CD8-positive, alpha-beta T cell (primary cell): ENCODE measurements at regions of chr19 and their contacts with region 1.

Region 1: DNA sequence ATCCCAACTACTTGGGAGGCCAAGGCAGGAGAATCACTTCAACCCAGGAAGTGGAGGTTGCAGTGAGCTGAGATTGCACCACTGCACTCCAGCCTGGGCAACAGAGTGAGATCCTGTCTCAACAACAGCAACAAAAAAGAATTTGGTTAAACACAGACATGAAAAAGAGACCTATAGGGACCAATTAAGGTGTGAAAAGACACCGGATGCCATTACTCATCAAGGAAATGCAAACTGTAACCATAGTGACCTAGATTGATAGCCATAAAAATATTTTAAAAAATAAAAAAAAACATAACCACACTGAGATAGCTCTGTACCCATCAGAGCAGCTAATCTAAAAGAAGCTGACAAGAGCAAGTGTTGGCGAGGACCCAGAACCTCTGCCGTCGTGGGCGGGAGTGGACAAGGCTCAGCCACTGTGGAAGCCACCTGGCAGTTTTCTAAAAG is 37.1 kb upstream of the ISYNA1 start:
- DNase-seq: peak in 5 of 9 experiments; percentile 42 to 89 (median 53)
- ATAC-seq: peak; percentile 72
- H3K4me3 ChIP-seq: no peak overlapping the region
- H3K4me3 Mint-ChIP-seq: no peak overlapping the region
- H3K27ac ChIP-seq: peak overlapping the region; percentile 42 to 91
- H3K27ac Mint-ChIP-seq: peak overlapping the region; percentile 90
- H3K4me1 ChIP-seq: peaks cover 55% of the 10 kb centered on the region
- H3K4me1 Mint-ChIP-seq: peaks cover 60% of the 10 kb centered on the region
- H3K27me3 ChIP-seq: no peaks in the 10 kb centered on the region
- H3K27me3 Mint-ChIP-seq: no peaks in the 10 kb centered on the region
- CTCF ChIP-seq: no peak

Region 2: DNA sequence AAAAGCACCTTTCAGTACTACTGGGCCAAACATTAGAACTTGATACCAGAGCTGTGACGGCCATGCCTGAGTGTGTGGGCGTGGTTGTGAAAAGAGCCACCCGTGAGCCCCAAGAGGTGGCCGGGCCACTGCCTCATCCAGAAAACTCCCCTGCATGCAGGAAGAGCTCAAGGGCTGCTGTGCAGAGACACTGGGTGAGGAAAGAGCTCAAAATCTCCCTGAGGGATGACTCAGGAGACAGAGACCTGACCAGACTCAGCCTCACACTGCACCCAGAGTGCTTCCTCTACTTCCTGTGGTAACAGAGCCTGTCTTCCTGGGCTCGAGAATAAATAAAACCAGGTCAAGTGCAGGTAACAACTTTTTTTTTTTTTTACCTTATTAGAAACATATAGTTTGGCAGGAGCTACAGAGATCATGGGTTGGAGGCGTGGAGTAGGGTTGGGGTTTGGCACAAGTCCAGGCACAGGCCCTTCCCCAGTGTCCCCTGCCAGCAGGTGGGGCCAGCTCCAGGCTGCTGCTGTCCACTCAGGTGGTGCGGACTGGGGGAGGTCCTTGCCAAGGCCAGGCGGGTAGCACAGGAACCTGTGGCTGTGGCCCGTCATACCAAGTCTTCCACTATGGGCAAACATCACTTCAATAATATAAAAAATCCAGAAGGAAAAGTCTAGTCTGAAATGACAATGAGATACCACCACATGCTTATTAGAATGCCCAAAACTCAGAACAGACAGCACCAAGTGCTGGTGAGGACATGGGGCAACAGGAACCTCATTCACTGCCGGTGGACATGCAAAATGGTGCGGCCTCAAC is 21.3 kb after region 1 on chr19:
- CTCF ChIA-PET with region 1: interaction called, 4 read pairs
- POLR2A ChIA-PET with region 1: no interaction called
- intact Hi-C with region 1: loop called in 1 of 2 experiments (anchors 1 kb)
- DNase-seq: peak; percentile 38 to 94 (median 67)
- ATAC-seq: peak; percentile 86
- H3K4me3 ChIP-seq: peak overlapping the region in 1 of 2 experiments; percentile 21
- H3K4me3 Mint-ChIP-seq: peak overlapping the region; percentile 62
- H3K27ac ChIP-seq: peak overlapping the region; percentile 23 to 96
- H3K27ac Mint-ChIP-seq: peak overlapping the region; percentile 58
- H3K4me1 ChIP-seq: peaks cover 67% of the 10 kb centered on the region
- H3K4me1 Mint-ChIP-seq: peaks cover 80% of the 10 kb centered on the region
- H3K27me3 ChIP-seq: no peaks in the 10 kb centered on the region
- H3K27me3 Mint-ChIP-seq: no peaks in the 10 kb centered on the region
- CTCF ChIP-seq: no peak

Region 3: GRCh38 chr19:18675779-18676178 is 200.8 kb after region 1 on chr19:
- CTCF ChIA-PET with region 1: interaction called, 4 read pairs
- POLR2A ChIA-PET with region 1: no interaction called
- intact Hi-C with region 1: loop called (anchors 2 to 5 kb)
- DNase-seq: peak in 4 of 9 experiments; percentile 22 to 50 (median 29)
- ATAC-seq: no peak
- H3K4me3 ChIP-seq: no peak overlapping the region
- H3K4me3 Mint-ChIP-seq: no peak overlapping the region
- H3K27ac ChIP-seq: no peak overlapping the region
- H3K27ac Mint-ChIP-seq: no peak overlapping the region
- H3K4me1 ChIP-seq: no peaks in the 10 kb centered on the region
- H3K4me1 Mint-ChIP-seq: no peaks in the 10 kb centered on the region
- H3K27me3 ChIP-seq: no peaks in the 10 kb centered on the region
- H3K27me3 Mint-ChIP-seq: no peaks in the 10 kb centered on the region
- CTCF ChIP-seq: no peak

Region 4: DNA sequence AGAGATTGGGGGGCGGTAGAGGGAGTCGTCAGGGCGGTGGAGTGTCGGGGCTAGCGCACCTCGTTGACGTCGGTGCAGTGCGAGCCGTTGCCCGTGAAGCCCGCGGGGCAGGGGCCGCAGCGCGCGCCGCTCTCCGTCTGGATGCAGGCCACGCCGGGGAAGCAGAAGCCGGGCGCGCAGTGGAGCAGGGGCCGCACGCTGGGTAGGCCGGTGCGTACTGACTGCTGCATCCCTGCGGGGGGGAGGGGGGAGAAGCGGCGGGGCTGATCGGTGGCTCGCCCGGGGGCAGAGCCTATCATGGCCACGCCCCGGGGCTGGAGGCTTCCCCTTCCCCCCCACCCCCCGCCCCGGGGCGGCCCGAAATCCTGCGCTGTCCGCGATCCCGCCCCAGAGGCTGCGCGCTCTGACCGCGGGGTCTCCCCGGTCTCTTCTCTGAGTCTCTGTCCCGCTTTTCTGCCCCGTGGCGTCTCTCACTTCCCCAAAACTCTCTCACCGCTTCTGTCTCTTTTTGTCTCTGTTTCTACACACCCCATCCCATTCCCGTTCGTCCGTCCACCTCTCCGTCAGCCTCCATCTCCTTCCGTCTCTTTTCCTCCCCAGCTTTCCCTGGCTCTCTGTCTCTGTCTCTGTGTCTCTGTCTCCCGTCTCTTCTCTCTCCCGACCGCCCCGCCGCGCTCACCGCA is 315.0 kb after region 1 on chr19:
- CTCF ChIA-PET with region 1: no interaction called
- POLR2A ChIA-PET with region 1: no interaction called
- intact Hi-C with region 1: no loop called
- DNase-seq: peak in 3 of 9 experiments; percentile 25 to 53 (median 47)
- ATAC-seq: peak; percentile 15
- H3K4me3 ChIP-seq: no peak overlapping the region
- H3K4me3 Mint-ChIP-seq: peak overlapping the region; percentile 82
- H3K27ac ChIP-seq: no peak overlapping the region
- H3K27ac Mint-ChIP-seq: no peak overlapping the region
- H3K4me1 ChIP-seq: peaks cover 30% of the 10 kb centered on the region
- H3K4me1 Mint-ChIP-seq: peaks cover 36% of the 10 kb centered on the region
- H3K27me3 ChIP-seq: peaks cover 36 to 51% of the 10 kb centered on the region in 2 experiments
- H3K27me3 Mint-ChIP-seq: peaks cover 70% of the 10 kb centered on the region
- CTCF ChIP-seq: no peak

Region 5: GRCh38 chr19:18846862-18847548 is 372.0 kb after region 1 on chr19:
- CTCF ChIA-PET with region 1: interaction called, 11 read pairs
- POLR2A ChIA-PET with region 1: no interaction called
- intact Hi-C with region 1: no loop called
- DNase-seq: peak; percentile 37 to 81 (median 73)
- ATAC-seq: peak; percentile 65
- H3K4me3 ChIP-seq: no peak overlapping the region
- H3K4me3 Mint-ChIP-seq: peak overlapping the region; percentile 36
- H3K27ac ChIP-seq: no peak overlapping the region
- H3K27ac Mint-ChIP-seq: no peak overlapping the region
- H3K4me1 ChIP-seq: peaks cover 40% of the 10 kb centered on the region
- H3K4me1 Mint-ChIP-seq: peaks cover 56% of the 10 kb centered on the region
- H3K27me3 ChIP-seq: no peaks in the 10 kb centered on the region
- H3K27me3 Mint-ChIP-seq: no peaks in the 10 kb centered on the region
- CTCF ChIP-seq: peak; percentile 78